ENCODE measurements at regions of chr18 and their contacts with region 1.

Region 1: DNA sequence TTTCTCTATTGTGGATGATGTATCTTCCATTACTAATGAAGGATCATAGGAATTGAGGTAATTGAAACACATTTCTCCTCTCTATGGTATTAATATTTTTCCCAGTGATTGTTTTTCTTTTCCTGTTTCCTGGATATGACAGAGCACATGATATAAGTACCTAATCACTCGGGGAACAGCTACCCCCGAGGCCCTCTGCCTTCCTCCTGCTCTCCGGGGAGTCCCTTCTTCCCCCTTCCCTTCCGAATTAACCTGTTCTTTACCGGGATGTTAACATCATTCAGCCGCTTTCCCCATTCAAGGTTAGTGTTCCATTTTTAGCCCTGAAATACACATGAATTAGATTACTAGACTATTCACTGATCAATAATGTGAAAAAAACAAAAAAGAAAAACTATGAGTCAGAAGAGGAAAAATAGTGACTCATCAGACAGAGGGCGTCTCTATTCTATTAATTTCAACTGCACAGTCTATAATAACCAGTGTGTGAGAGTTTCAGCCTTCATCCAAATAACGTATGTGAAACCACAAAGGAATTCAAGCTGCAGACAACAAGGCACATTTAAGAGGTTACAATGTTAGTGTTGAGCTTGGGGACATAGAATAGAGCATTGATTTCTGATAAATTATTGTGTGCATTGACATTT is 450.8 kb downstream of the DLGAP1 start:
- DNase-seq: no peak
- ATAC-seq: peak in 2 of 4 donors; percentile 53 to 67
- H3K4me3 ChIP-seq: no peak overlapping the region
- H3K27ac ChIP-seq: no peak overlapping the region
- H3K4me1 ChIP-seq: no peaks in the 10 kb centered on the region
- H3K27me3 ChIP-seq: no peaks in the 10 kb centered on the region
- CTCF ChIP-seq: no peak

Region 2: DNA sequence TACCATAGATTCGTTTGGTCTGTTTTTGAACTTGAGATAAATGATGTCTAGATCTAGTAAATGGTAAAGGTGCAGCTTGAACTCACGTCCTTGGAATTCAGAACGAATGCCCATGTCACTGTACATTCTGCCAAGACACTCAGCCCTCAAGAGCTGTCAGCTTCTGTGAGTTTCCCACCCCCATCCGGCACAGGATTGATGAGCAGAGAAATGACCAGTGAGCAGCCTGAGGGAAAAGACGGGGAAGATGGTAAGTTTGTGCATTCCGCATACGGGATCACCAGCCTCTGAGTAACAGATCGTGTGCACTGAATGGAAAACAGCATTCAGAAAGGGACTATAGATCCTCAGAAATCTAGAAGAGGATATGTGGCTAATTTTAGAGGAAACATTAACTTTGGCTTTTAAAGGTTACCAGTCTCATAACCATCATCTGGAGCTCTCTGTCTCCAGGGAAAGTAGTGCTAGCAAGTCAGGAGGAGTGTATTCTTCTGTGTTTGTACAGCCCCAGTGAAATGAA is 228.4 kb before region 1 on chr18:
- intact Hi-C with region 1: loop called in 1 of 3 experiments (anchors 5 kb)
- DNase-seq: no peak
- ATAC-seq: no peak
- H3K4me3 ChIP-seq: no peak overlapping the region
- H3K27ac ChIP-seq: no peak overlapping the region
- H3K4me1 ChIP-seq: peaks cover 8 to 15% (median 10%) of the 10 kb centered on the region in 3 donors
- H3K27me3 ChIP-seq: no peaks in the 10 kb centered on the region
- CTCF ChIP-seq: no peak

Region 3: DNA sequence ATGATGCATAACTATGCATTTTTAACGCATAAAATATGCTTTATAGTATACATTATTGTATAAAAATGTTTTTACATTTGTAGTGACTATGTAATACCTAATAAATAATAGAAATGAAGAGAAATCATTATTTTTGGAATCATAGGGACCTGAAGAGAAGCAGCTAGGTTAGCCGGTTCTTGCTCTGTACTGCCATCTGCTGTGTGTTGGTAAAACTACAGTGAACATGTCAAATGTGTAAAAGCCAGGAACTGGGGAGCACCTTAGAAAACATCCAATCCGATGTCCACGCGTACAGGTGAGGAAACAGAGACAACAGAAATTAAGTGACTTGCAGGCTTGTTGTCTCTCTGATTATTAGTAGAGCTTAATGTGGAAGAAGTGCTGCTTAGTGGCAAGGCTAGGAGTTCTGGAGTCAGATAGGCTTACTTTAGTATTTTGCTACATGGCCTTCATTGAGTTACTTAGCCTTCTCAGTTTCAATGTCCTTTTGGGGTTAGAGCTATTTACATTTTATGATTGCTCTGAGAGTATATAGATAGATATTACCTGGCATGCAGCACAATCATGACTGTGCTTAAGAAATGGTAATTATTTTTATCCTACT is 64.3 kb after region 1 on chr18:
- intact Hi-C with region 1: no loop called
- DNase-seq: peak in 2 of 6 donors; percentile 4 to 32
- ATAC-seq: peak in 3 of 4 donors; percentile 74 to 79 (median 76)
- H3K4me3 ChIP-seq: no peak overlapping the region
- H3K27ac ChIP-seq: no peak overlapping the region
- H3K4me1 ChIP-seq: no peaks in the 10 kb centered on the region
- H3K27me3 ChIP-seq: no peaks in the 10 kb centered on the region
- CTCF ChIP-seq: peak; percentile 23 to 65 (median 42)